ENCODE measurements at regions of chr18 and their contacts with region 1.

Region 1: DNA sequence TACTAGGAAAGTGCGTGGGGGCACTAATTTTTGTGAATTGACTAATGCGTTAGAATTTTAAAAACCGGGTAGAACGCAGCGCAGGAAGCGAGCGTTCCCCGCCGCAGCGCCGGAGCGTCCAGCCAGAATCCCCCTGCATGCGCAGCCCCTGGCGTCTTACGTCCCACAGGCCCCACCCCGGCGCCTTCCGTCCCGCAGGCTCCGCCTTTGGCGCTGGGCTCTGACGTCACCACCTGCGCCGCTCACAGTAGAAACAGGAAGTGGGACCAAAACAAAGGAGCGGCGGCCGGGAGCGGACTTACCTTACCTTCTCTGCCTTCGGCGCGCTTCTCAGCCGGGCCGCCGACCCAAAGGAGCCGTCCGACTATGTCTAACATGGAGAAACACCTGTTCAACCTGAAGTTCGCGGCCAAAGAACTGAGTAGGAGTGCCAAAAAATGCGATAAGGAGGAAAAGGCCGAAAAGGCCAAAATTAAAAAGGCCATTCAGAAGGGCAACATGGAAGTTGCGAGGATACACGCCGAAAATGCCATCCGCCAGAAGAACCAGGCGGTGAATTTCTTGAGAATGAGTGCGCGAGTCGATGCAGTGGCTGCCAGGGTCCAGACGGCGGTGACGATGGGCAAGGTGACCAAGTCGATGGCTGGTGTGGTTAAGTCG is at the start of gene CHMP1B:
- DNase-seq: peak; percentile 98
- H3K4me3 ChIP-seq: peak within 1 kb of the TSS; percentile 82
- H3K27ac ChIP-seq: peak within 1 kb of the TSS; percentile 80
- H3K4me1 ChIP-seq: peaks cover 3% of the 10 kb centered on the region
- H3K27me3 ChIP-seq: peaks cover 4% of the 10 kb centered on the region
- CTCF ChIP-seq: no peak
- total RNA-seq, gene CHMP1B: 17.1 and 19.1 TPM in 2 replicates

Region 2: DNA sequence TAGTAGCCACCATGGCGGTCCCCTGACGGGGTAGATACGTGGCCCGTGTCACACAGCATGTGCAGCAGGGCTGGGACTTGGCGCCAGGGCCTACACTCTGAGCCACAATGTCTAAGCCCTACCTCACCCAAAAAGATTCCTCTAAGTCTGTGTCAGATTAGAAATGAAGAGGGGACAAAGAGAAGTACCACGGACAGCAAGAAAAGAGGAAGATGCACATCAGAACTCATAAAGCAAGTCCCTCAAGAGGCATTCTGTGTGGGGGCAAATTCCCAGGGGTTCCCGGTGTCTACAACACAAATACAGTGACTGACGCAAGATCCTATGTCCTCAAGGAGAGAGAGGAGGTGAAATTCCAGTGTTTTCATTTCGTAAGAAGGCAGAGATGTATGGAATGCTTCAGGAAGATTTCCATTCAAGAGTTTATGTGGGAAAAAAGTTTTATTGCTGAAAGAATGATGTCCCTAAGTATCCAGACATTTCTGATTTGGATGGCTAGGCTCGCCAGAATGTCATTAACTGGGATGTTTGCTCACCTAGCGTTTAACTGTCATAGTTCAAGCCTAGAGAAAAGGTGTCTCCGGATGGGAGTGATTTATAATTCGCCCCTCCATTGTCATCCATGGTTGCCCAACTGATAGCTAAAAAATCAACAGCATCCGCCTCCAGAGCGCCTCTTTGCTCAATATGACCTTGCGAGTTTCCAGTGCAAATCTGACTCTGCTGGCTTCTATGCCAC is 75.7 kb before region 1 on chr18:
- CTCF ChIA-PET with region 1: no interaction called
- POLR2A ChIA-PET with region 1: no interaction called
- intact Hi-C with region 1: no loop called
- DNase-seq: no peak
- H3K4me3 ChIP-seq: no peak overlapping the region
- H3K27ac ChIP-seq: no peak overlapping the region
- H3K4me1 ChIP-seq: no peaks in the 10 kb centered on the region
- H3K27me3 ChIP-seq: peaks cover 10% of the 10 kb centered on the region
- CTCF ChIP-seq: no peak

Region 3: DNA sequence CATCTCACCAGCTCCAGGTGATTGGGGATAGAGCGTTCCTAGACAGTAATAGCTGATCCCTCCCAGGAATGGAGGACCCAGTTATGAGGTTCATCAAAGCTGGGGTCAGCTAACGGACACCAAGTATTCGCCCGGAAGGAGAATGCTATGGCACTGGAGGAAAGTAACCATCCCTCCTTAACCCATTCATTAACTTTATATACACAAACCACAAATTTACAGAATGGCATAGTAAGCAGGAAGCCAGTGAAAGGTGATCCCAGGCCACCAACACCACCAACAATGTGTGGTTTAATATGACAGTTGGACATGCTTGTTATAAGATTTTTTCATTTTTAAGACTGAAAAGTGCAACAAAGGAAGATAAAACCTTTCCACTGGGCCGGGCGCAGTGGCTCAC is 55.4 kb before region 1 on chr18:
- CTCF ChIA-PET with region 1: interaction called, 11 read pairs
- POLR2A ChIA-PET with region 1: no interaction called
- intact Hi-C with region 1: no loop called
- DNase-seq: no peak
- H3K4me3 ChIP-seq: no peak overlapping the region
- H3K27ac ChIP-seq: no peak overlapping the region
- H3K4me1 ChIP-seq: no peaks in the 10 kb centered on the region
- H3K27me3 ChIP-seq: peaks cover 9% of the 10 kb centered on the region
- CTCF ChIP-seq: no peak

Measured in A673 (cell line).